Activated T-helper 1 cell treated with anti-CD3 and anti-CD28 coated beads, Interleukin-12 subunit alpha, Interleukin-12 subunit beta, Interleukin-2, Interleukin-4 antibody, amounts not matched to agents 30 ng/mL and 10 ng/mL and 1 ng/mL, durations not matched to agents 14 hours and 24 hours and 36 hours (primary cell): ENCODE measurements at regions of chr9 and their contacts with region 1.

Region 1: GRCh38 chr9:68919661-68920060 is 94.3 kb downstream of the PRKACG start:
- DNase-seq: no peak
- H3K4me3 Mint-ChIP-seq: no peak overlapping the region
- H3K27ac Mint-ChIP-seq: no peak overlapping the region
- H3K4me1 Mint-ChIP-seq: peaks cover 45% of the 10 kb centered on the region
- H3K27me3 Mint-ChIP-seq: peaks cover 3% of the 10 kb centered on the region

Region 2: DNA sequence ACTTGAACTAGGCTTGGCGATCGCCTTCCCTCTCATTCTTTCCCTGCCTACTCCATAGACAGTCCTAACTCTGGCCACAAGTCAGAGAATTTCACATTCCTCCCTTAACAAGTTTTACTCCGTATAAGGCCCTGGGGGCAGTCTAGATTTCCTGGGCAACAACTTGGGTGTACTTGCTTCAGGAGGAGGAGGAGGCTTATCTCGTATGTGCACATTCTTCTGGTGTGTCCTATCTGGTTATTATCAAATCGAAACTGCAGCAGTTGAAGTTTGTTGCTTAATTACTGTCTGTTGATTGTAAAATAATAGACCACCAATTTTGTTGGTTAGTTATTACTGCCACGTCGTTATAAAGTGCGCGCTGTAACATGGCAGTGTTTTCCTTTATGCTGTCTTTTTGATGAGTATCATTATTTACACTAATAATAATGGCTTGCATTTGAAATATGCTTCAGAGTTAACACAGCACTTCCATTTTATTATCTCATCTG is 172.6 kb before region 1 on chr9:
- intact Hi-C with region 1: no loop called
- DNase-seq: no peak
- H3K4me3 Mint-ChIP-seq: no peak overlapping the region
- H3K27ac Mint-ChIP-seq: no peak overlapping the region
- H3K4me1 Mint-ChIP-seq: peaks cover 7% of the 10 kb centered on the region
- H3K27me3 Mint-ChIP-seq: peaks cover under 1% of the 10 kb centered on the region

Region 3: GRCh38 chr9:68844631-68845612 is 74.7 kb before region 1 on chr9:
- intact Hi-C with region 1: loop called (anchors 5 kb)
- DNase-seq: no peak
- H3K4me3 Mint-ChIP-seq: no peak overlapping the region
- H3K27ac Mint-ChIP-seq: peak overlapping the region; percentile 65
- H3K4me1 Mint-ChIP-seq: peaks cover 24% of the 10 kb centered on the region
- H3K27me3 Mint-ChIP-seq: no peaks in the 10 kb centered on the region

Region 4: DNA sequence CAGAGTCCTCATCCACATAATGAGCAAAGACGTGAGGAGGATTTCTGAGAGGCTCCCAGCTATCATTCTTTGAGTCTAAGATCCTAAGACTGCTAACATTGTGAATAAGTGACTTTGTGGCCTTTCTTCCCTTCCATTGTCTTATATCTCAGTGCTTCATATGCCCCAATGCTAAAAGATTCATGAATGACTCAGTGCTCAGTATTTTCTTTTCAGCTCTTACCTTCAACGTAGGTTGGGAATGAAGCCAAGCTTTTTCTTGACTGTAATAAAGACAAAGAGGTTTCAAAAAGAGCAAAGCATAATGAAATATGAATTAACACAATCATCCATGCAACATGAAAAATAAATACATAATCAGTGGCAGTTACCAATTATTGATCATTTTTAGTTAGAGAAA is 551.8 kb after region 1 on chr9:
- intact Hi-C with region 1: no loop called
- DNase-seq: no peak
- H3K4me3 Mint-ChIP-seq: no peak overlapping the region
- H3K27ac Mint-ChIP-seq: no peak overlapping the region
- H3K4me1 Mint-ChIP-seq: peaks cover 36% of the 10 kb centered on the region
- H3K27me3 Mint-ChIP-seq: no peaks in the 10 kb centered on the region